ENCODE measurements at regions of chr10 and their contacts with region 1.

Region 1: DNA sequence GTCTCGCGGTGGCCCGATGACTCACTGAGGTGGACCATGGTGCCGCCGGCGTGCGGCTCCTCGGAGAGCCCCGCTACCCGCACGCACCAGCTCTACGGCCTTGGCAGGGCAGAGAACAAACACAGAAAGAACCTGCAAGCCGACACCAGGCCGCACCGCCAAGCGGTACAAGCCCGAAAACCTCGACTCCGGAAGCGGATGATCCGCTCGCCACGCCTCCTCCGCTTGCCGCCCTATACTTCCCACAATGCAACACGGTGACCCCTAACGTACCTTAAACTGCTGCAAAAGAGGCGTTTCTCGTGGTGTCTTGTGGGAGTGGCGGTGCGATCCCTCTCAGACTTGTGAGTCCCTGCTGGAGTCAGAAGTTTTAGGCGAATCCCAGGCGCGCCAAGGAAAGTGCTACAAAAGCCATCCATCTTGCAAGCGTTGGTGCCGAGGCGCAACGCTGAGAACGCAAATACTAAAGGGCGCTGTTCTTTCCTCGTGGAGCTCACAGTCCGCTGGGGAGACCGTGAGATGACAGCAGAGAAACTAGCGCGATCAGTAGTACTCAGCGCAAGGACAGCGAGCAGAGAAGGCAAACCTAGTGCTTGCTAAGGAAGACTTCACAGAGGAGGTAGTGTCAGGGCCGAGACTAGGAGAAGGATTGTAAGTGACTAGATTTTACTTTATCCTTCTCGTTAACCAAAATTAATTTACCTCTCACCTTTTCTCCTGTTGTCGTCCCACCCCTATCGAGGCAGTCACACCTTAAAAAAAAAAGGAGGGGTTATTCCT is at the start of gene MRPS16:
- DNase-seq: peak; percentile 98
- H3K4me3 ChIP-seq: peak within 1 kb of the TSS; percentile 81
- H3K27ac ChIP-seq: peak within 1 kb of the TSS; percentile 90
- H3K4me1 ChIP-seq: peaks cover 0 to 31% (median 20%) of the 10 kb centered on the region in 4 donors
- H3K27me3 ChIP-seq: no peaks in the 10 kb centered on the region
- CTCF ChIP-seq: no peak

Region 2: GRCh38 chr10:73339436-73339835 is 86.8 kb after region 1 on chr10:
- intact Hi-C with region 1: no loop called
- DNase-seq: no peak
- H3K4me3 ChIP-seq: no peak overlapping the region
- H3K27ac ChIP-seq: no peak overlapping the region
- H3K4me1 ChIP-seq: no peaks in the 10 kb centered on the region
- H3K27me3 ChIP-seq: no peaks in the 10 kb centered on the region
- CTCF ChIP-seq: no peak

Region 3: GRCh38 chr10:73358331-73359279 is 106.0 kb after region 1 on chr10 and contains the start of gene CFAP70:
- intact Hi-C with region 1: loop called (anchors 5 kb)
- DNase-seq: peak; percentile 90 to 94
- H3K4me3 ChIP-seq: peak within 1 kb of the TSS; percentile 60 to 89
- H3K27ac ChIP-seq: peak within 1 kb of the TSS; percentile 54 to 71
- H3K4me1 ChIP-seq: peaks cover 0 to 12% (median 3%) of the 10 kb centered on the region in 4 donors
- H3K27me3 ChIP-seq: no peaks in the 10 kb centered on the region
- CTCF ChIP-seq: no peak

Region 4: DNA sequence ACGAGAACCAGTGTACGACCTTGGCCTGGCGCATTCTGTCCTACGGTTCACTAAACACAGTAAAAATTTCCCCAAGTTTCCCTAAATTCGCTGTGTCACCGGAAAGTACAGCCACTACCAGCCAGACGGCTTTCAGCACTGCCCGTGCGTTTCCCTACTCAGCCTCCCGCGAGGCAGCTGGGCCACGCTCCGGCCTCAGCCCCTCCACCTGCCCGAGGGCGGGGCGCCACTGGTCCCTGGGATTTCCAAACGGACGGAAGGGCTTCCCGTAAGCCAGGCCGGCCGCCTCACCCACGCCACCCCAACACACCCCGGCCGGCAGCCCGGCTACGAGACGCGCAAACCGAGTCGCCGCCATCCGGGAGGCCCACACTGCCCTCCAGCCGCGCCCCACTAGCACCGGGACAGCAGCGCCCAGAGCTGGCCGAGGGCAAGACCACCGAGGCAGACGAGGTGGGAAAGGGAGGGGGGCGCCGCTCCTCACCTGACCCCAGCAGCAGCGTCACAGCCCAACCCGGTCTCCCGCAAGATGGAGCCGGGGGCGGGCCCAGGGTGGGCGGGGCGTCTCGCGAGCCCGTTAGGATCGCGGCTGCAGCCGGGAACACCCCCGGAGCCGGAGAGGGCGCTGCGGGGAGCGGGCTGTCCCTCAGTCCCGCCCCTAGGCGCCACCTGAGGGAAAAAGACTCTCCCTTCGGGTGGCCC is 161.0 kb after region 1 on chr10 and contains the start of gene ANXA7:
- intact Hi-C with region 1: loop called (anchors 10 kb)
- DNase-seq: peak; percentile 90 to 96
- H3K4me3 ChIP-seq: peak within 1 kb of the TSS; percentile 88 to 90
- H3K27ac ChIP-seq: peak within 1 kb of the TSS; percentile 97 to 98
- H3K4me1 ChIP-seq: peaks cover 0 to 34% (median 17%) of the 10 kb centered on the region in 4 donors
- H3K27me3 ChIP-seq: no peaks in the 10 kb centered on the region
- CTCF ChIP-seq: peak in 1 of 2 experiments; percentile 44